Naive thymus-derived CD4-positive, alpha-beta T cell (primary cell): ENCODE measurements at regions of chr3 and their contacts with region 1.

Region 1: DNA sequence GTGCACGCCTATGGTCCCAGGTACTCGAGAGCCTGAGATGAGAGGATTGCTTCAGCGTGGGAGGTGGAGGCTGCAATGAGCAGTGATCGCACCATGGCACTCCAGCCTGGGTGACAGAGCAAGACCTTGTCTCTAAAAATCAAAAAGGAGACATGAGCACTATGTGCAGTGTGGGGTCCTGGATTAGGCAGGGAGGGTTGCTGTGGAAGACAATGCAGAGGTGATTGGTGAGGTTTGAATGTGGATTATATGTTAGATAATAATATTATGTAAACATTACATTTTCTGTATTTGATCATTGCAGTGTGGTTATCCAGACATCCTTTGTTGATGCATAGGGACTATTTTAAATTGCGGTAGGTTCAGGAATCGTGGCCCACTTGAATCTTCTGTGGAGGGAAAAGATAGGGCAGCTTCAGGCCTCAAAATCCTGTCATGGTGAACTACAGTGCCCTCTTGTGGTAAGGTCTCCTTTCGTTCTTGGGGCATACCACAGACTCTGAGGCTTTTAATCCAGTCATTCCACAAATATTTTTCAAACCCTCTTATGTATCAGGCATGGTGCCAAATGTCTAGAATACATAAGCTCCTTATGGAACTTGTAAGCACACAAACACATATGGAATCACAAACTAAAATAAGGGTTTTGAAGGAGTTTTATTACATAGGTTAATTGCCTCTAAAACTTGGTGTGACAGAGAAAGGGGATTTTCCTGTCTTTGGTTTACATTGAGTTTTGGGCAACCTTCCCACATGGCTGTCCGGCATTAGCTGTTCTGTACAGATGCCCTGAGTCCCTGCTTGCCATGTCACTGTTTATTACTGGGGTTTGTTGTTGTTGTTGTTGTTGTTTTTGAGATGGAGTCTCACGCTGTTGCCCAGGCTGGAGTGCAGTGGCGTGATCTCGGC is 37.7 kb downstream of the GPD1L start:
- DNase-seq: peak in 8 of 9 donors; percentile 30 to 70 (median 60)
- ATAC-seq: peak; percentile 75
- H3K4me3 ChIP-seq: no peak overlapping the region
- H3K4me3 Mint-ChIP-seq: no peak overlapping the region
- H3K27ac ChIP-seq: no peak overlapping the region
- H3K27ac Mint-ChIP-seq: peak overlapping the region in 1 of 9 donors; percentile 21
- H3K4me1 ChIP-seq: no peaks in the 10 kb centered on the region
- H3K4me1 Mint-ChIP-seq: peaks cover 0 to 25% (median 6%) of the 10 kb centered on the region in 7 donors
- H3K27me3 ChIP-seq: no peaks in the 10 kb centered on the region
- H3K27me3 Mint-ChIP-seq: no peaks in the 10 kb centered on the region

Region 2: GRCh38 chr3:30934208-30934550 is 1209.9 kb before region 1 on chr3:
- CTCF ChIA-PET with region 1: no interaction called
- POLR2A ChIA-PET with region 1: no interaction called
- intact Hi-C with region 1: loop called in 1 of 2 experiments (anchors 10 kb)
- DNase-seq: peak in 4 of 9 donors; percentile 2 to 16 (median 10)
- ATAC-seq: no peak
- H3K4me3 ChIP-seq: no peak overlapping the region
- H3K4me3 Mint-ChIP-seq: peak overlapping the region in 3 of 10 donors; percentile 11 to 65 (median 24)
- H3K27ac ChIP-seq: no peak overlapping the region
- H3K27ac Mint-ChIP-seq: no peak overlapping the region
- H3K4me1 ChIP-seq: no peaks in the 10 kb centered on the region
- H3K4me1 Mint-ChIP-seq: peaks cover 2 to 10% (median 8%) of the 10 kb centered on the region in 7 donors
- H3K27me3 ChIP-seq: no peaks in the 10 kb centered on the region
- H3K27me3 Mint-ChIP-seq: no peaks in the 10 kb centered on the region

Region 3: DNA sequence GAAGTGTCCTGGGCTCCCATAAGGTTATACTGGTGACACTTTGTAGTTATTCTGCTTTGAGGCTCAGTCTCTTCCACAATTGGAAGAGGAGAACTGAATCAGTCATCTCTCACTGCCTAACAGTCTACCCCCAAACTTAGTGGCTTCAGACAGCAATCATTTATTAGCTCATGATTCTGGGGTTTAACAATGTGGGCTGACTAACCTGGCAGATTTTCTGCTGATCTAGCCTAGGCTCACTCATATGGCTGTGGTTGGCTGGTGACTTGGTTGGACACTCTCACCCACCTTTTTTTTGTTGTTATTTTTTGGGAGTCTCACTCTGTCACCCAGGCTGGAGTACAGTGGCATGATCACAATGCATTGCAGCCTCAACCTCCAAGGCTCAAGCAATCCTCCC is 30.5 kb before region 1 on chr3:
- CTCF ChIA-PET with region 1: interaction called, 4 read pairs
- POLR2A ChIA-PET with region 1: interaction called, 7 read pairs
- intact Hi-C with region 1: loop called (anchors 1 kb)
- DNase-seq: no peak
- ATAC-seq: no peak
- H3K4me3 ChIP-seq: no peak overlapping the region
- H3K4me3 Mint-ChIP-seq: peak overlapping the region in 8 of 10 donors; percentile 70 to 90 (median 82)
- H3K27ac ChIP-seq: no peak overlapping the region
- H3K27ac Mint-ChIP-seq: peak overlapping the region in 8 of 9 donors; percentile 74 to 95 (median 92)
- H3K4me1 ChIP-seq: peaks cover 18 to 25% of the 10 kb centered on the region in 2 donors
- H3K4me1 Mint-ChIP-seq: peaks cover 32 to 95% (median 82%) of the 10 kb centered on the region in 7 donors
- H3K27me3 ChIP-seq: no peaks in the 10 kb centered on the region
- H3K27me3 Mint-ChIP-seq: no peaks in the 10 kb centered on the region

Region 4: DNA sequence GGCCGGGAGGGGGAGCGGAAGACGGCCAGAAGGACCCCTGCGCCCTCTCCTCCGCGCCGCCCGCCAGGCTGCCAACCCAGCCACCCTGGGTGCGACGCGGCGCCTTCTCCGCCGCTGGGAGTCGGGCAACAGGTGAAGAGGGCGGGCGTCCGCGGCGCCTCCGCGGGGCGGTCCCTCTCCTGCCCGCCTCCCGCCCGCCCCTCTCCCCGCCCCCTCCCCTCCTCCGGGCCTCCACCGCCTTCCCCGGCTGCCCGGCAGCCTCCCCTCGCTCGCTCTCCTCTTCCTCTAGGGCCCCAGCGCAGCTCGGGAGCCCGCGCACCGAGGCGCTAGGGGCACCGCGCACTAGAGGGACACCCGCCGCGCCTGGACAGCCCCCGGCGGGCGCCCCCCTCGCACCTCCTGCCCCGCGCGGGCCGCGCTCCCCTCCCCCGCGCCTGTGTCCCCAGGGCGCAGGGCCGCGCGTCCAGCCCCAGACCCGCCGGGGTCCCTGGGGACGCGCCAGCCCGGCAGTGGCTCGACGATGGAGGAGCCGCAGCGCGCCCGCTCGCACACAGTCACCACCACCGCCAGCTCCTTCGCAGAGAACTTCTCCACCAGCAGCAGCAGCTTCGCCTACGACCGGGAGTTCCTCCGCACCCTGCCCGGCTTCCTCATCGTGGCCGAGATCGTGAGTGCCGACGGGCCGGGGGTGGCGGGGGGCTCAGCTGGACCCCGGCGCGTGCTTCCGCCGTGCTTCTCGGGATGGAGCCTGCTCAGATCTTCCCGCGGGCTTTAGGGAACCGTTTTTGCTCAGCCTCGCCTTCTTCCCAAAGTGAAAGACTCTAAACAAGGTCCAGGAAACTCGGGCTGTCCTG is 94.6 kb after region 1 on chr3 and contains the start of gene CMTM8:
- CTCF ChIA-PET with region 1: no interaction called
- POLR2A ChIA-PET with region 1: no interaction called
- intact Hi-C with region 1: no loop called
- DNase-seq: peak; percentile 46 to 70 (median 67)
- ATAC-seq: peak; percentile 89
- H3K4me3 ChIP-seq: peak within 1 kb of the TSS; percentile 81
- H3K4me3 Mint-ChIP-seq: peak within 1 kb of the TSS; percentile 88 to 93 (median 90)
- H3K27ac ChIP-seq: peak within 1 kb of the TSS; percentile 64
- H3K27ac Mint-ChIP-seq: peak within 1 kb of the TSS; percentile 58 to 82 (median 74)
- H3K4me1 ChIP-seq: peaks cover 13 to 17% of the 10 kb centered on the region in 2 donors
- H3K4me1 Mint-ChIP-seq: peaks cover 37 to 58% (median 50%) of the 10 kb centered on the region in 7 donors
- H3K27me3 ChIP-seq: no peaks in the 10 kb centered on the region
- H3K27me3 Mint-ChIP-seq: peaks cover 0 to 25% (median 0%) of the 10 kb centered on the region in 5 donors
- total RNA-seq, gene CMTM8: 7.4 to 13.6 (median 8.6) TPM